ENCODE measurements at regions of chr9 and their contacts with region 1.

Region 1: GRCh38 chr9:116000748-116001329 is 152.8 kb upstream of the PAPPA start:
- DNase-seq: no peak
- ATAC-seq: no peak
- H3K4me3 ChIP-seq: no peak overlapping the region
- H3K27ac ChIP-seq: no peak overlapping the region
- H3K4me1 ChIP-seq: no peaks in the 10 kb centered on the region
- H3K27me3 ChIP-seq: no peaks in the 10 kb centered on the region
- CTCF ChIP-seq: peak in 8 of 9 donors; percentile 25 to 47 (median 42)

Region 2: GRCh38 chr9:115883457-115884329 is 117.1 kb before region 1 on chr9:
- intact Hi-C with region 1: loop called in 3 of 10 experiments (anchors 10 kb)
- DNase-seq: peak in 1 of 2 donors; percentile 13
- ATAC-seq: peak in 6 of 8 donors; percentile 43 to 81 (median 64)
- H3K4me3 ChIP-seq: no peak overlapping the region
- H3K27ac ChIP-seq: no peak overlapping the region
- H3K4me1 ChIP-seq: no peaks in the 10 kb centered on the region
- H3K27me3 ChIP-seq: no peaks in the 10 kb centered on the region
- CTCF ChIP-seq: peak; percentile 11 to 66 (median 57)